Prostate gland (tissue), 2 donors: ENCODE measurements at regions of chr17 and their contacts with region 1.

Region 1: GRCh38 chr17:7280519-7281429 is 744 bp upstream of the SLC2A4 start:
- DNase-seq: peak; percentile 74
- H3K4me3 ChIP-seq: peak overlapping the region; percentile 34 to 41
- H3K27ac ChIP-seq: peak overlapping the region; percentile 77
- H3K4me1 ChIP-seq: peaks cover 9% of the 10 kb centered on the region
- H3K27me3 ChIP-seq: no peaks in the 10 kb centered on the region
- CTCF ChIP-seq: peak; percentile 79 to 99 (median 88)
- POLR2A ChIP-seq: peak; percentile 29

Region 2: DNA sequence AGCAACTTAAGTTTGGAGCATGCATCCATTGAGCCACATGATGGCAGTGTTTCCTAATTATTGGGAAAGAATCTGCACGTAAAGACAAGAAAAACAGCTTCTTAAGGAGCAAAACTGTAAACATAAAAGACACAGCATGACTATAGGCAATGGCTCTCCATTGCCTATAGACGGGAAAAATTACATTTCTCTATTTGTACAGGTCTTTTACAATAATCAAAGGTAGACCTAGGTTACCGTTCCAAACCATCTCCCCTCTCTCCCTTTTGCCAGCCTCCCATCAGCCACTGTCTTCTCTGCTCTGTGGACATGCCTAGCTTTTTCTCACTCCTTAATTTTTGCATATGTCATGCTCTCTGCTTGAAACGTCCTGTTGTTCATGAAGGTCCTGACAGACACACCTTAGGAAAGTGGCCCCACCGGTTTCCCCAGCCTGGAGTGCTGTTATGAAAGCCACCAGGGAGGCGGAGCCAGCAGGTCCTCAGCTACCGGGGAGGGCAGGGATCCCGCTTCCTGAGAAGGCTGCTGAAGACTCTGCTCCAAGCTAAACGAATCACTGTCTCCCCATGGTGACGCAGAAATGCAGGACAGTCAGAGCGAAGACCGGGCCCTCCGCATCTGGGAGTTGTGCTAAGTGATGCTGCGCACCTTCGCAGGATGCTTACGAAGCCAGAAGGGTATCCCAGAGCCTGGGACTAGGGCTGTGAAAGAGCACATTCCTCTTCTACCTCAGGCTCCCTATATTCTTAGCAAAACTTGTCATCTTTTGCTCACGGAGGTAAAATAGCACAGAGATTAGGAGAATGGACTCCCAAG is 234.7 kb before region 1 on chr17:
- intact Hi-C with region 1: loop called (anchors 10 kb)
- DNase-seq: peak; percentile 92
- H3K4me3 ChIP-seq: peak overlapping the region; percentile 11 to 33
- H3K27ac ChIP-seq: peak overlapping the region; percentile 89
- H3K4me1 ChIP-seq: peaks cover 25% of the 10 kb centered on the region
- H3K27me3 ChIP-seq: no peaks in the 10 kb centered on the region
- CTCF ChIP-seq: peak; percentile 59 to 97 (median 92)
- POLR2A ChIP-seq: no peak

Region 3: GRCh38 chr17:7252176-7253043 is 28.4 kb before region 1 on chr17 and contains the start of gene ELP5:
- intact Hi-C with region 1: loop called (anchors 2 kb)
- DNase-seq: peak; percentile 88
- H3K4me3 ChIP-seq: peak within 1 kb of the TSS; percentile 98
- H3K27ac ChIP-seq: peak within 1 kb of the TSS; percentile 100
- H3K4me1 ChIP-seq: peaks cover 13% of the 10 kb centered on the region
- H3K27me3 ChIP-seq: no peaks in the 10 kb centered on the region
- CTCF ChIP-seq: peak in 3 of 4 experiments; percentile 58 to 62 (median 58)
- POLR2A ChIP-seq: peak; percentile 43
- total RNA-seq, gene ELP5: 50.1 to 65.2 TPM

Region 4: DNA sequence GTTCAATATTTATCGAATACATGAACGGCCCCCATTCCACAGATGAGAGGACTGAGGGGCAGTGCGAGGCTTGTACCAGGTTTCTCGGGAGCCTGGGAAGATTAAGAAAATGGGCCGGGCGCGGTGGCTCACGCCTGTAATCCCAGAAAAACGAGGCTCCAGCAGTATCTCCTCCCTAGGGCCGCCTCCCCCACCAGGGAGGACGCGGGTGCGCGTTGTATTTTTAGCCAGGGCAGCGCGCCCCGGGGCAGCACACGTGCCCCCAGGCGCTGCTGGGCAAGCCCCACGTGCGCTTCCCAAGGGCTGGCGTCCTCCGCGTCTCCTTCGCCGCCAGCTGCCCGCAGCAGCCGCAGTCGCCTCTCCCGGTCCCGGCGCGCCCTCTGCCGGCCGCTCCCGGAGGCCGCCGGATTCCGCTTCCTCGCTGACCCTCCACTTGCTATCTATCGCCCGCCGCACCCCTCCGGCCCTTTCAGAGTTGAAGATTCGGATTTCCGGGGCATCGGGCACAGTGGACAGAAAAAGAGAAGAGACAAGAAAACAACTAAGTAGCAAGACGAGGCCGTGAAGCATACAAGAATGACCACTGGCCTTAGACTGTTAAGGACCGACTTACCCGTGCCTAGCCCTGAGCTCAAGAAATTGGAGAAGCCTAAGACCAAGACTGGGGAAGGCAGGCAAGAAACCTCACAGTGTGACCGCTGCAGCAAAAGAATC is 15.6 kb after region 1 on chr17:
- intact Hi-C with region 1: loop called (anchors 1 kb)
- DNase-seq: peak; percentile 73
- H3K4me3 ChIP-seq: peak overlapping the region in 1 of 2 donors; percentile 3
- H3K27ac ChIP-seq: peak overlapping the region; percentile 5 to 25
- H3K4me1 ChIP-seq: peaks cover 13% of the 10 kb centered on the region
- H3K27me3 ChIP-seq: no peaks in the 10 kb centered on the region
- CTCF ChIP-seq: peak; percentile 85 to 98 (median 96)
- POLR2A ChIP-seq: no peak

Region 5: GRCh38 chr17:7426896-7427489 is 146.2 kb after region 1 on chr17:
- intact Hi-C with region 1: no loop called
- DNase-seq: no peak
- H3K4me3 ChIP-seq: no peak overlapping the region
- H3K27ac ChIP-seq: no peak overlapping the region
- H3K4me1 ChIP-seq: no peaks in the 10 kb centered on the region
- H3K27me3 ChIP-seq: no peaks in the 10 kb centered on the region
- CTCF ChIP-seq: no peak
- POLR2A ChIP-seq: no peak